CD4-positive, alpha-beta T cell (primary cell): ENCODE measurements at regions of chr6 and their contacts with region 1.

Region 1: GRCh38 chr6:37566111-37566949 is 66.6 kb upstream of the CCDC167 start:
- DNase-seq: peak; percentile 41 to 86 (median 70)
- ATAC-seq: peak; percentile 91
- H3K4me3 ChIP-seq: peak overlapping the region; percentile 56
- H3K4me3 Mint-ChIP-seq: peak overlapping the region; percentile 49
- H3K27ac ChIP-seq: no peak overlapping the region
- H3K27ac Mint-ChIP-seq: no peak overlapping the region
- H3K4me1 ChIP-seq: peaks cover 13% of the 10 kb centered on the region
- H3K4me1 Mint-ChIP-seq: peaks cover 12% of the 10 kb centered on the region
- H3K27me3 ChIP-seq: peaks cover 0 to 4% of the 10 kb centered on the region in 2 experiments
- H3K27me3 Mint-ChIP-seq: no peaks in the 10 kb centered on the region
- CTCF ChIP-seq: peak; percentile 93

Region 2: GRCh38 chr6:37207903-37208456 is 358.4 kb before region 1 on chr6:
- CTCF ChIA-PET with region 1: no interaction called
- POLR2A ChIA-PET with region 1: no interaction called
- intact Hi-C with region 1: no loop called
- DNase-seq: peak; percentile 83 to 93 (median 89)
- ATAC-seq: peak; percentile 73
- H3K4me3 ChIP-seq: no peak overlapping the region
- H3K4me3 Mint-ChIP-seq: peak overlapping the region; percentile 26
- H3K27ac ChIP-seq: no peak overlapping the region
- H3K27ac Mint-ChIP-seq: peak overlapping the region; percentile 58
- H3K4me1 ChIP-seq: peaks cover 56% of the 10 kb centered on the region
- H3K4me1 Mint-ChIP-seq: peaks cover 50% of the 10 kb centered on the region
- H3K27me3 ChIP-seq: no peaks in the 10 kb centered on the region
- H3K27me3 Mint-ChIP-seq: no peaks in the 10 kb centered on the region
- CTCF ChIP-seq: peak; percentile 86

Region 3: GRCh38 chr6:37324131-37325033 is 241.9 kb before region 1 on chr6:
- CTCF ChIA-PET with region 1: no interaction called
- POLR2A ChIA-PET with region 1: no interaction called
- intact Hi-C with region 1: loop called in 1 of 2 experiments (anchors 1 kb)
- DNase-seq: peak in 2 of 14 experiments; percentile 7 to 8
- ATAC-seq: no peak
- H3K4me3 ChIP-seq: no peak overlapping the region
- H3K4me3 Mint-ChIP-seq: no peak overlapping the region
- H3K27ac ChIP-seq: no peak overlapping the region
- H3K27ac Mint-ChIP-seq: peak overlapping the region; percentile 16
- H3K4me1 ChIP-seq: no peaks in the 10 kb centered on the region
- H3K4me1 Mint-ChIP-seq: no peaks in the 10 kb centered on the region
- H3K27me3 ChIP-seq: no peaks in the 10 kb centered on the region
- H3K27me3 Mint-ChIP-seq: no peaks in the 10 kb centered on the region
- CTCF ChIP-seq: no peak

Region 4: GRCh38 chr6:37381579-37381978 is 184.8 kb before region 1 on chr6:
- CTCF ChIA-PET with region 1: no interaction called
- POLR2A ChIA-PET with region 1: interaction called, 3 read pairs
- intact Hi-C with region 1: loop called (anchors 2 to 5 kb)
- DNase-seq: peak in 7 of 14 experiments; percentile 1 to 74 (median 24)
- ATAC-seq: peak; percentile 41
- H3K4me3 ChIP-seq: no peak overlapping the region
- H3K4me3 Mint-ChIP-seq: no peak overlapping the region
- H3K27ac ChIP-seq: no peak overlapping the region
- H3K27ac Mint-ChIP-seq: no peak overlapping the region
- H3K4me1 ChIP-seq: no peaks in the 10 kb centered on the region
- H3K4me1 Mint-ChIP-seq: no peaks in the 10 kb centered on the region
- H3K27me3 ChIP-seq: no peaks in the 10 kb centered on the region
- H3K27me3 Mint-ChIP-seq: no peaks in the 10 kb centered on the region
- CTCF ChIP-seq: peak; percentile 57

Region 5: DNA sequence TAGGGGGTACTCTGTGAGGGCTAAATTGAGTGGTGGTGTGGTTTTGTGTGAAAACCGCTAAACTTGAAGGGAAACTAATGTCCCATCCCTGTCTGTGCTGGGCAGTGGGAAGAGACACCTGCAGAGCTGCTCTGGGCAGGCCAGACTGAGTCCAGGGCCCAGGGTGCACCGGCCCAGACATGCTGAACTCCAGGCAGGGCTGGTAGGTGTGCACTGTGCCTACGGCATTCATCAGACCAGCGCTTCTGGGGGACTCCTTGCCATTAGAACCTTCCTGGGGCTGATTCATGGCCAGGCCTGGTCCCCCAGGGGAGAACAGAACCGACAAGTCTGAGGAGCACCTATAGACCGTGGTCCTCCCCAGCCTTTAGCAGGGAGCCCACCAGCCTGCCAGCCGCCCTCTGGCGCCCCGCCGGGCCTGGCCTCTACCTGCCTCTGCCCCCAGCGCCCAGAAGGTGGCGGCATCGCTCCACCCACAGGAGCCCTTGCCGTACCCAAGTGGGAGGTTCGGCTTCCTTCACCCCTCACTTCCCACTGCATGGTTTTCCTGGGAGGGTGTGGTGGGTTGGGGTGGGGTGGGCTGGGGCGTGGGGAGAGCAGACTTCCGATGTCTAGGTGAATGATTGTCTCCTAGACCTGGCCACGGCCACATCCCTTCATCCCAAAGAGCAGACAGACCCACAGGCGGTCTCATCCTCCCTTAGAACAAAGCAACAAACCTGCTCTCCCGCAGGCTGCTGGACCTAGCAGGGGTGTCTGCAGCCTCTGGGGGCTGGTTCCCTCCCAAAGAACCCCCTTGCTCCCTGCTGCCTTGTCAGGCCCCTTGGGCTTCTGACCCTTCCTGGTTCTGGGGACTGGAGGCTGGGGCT is 82.2 kb before region 1 on chr6:
- CTCF ChIA-PET with region 1: interaction called, 9 read pairs
- POLR2A ChIA-PET with region 1: interaction called, 4 read pairs
- intact Hi-C with region 1: loop called (anchors 1 kb)
- DNase-seq: peak; percentile 62 to 89 (median 76)
- ATAC-seq: peak; percentile 65
- H3K4me3 ChIP-seq: no peak overlapping the region
- H3K4me3 Mint-ChIP-seq: no peak overlapping the region
- H3K27ac ChIP-seq: peak overlapping the region in 1 of 2 donors; percentile 50
- H3K27ac Mint-ChIP-seq: no peak overlapping the region
- H3K4me1 ChIP-seq: peaks cover 40% of the 10 kb centered on the region
- H3K4me1 Mint-ChIP-seq: peaks cover 14% of the 10 kb centered on the region
- H3K27me3 ChIP-seq: no peaks in the 10 kb centered on the region
- H3K27me3 Mint-ChIP-seq: no peaks in the 10 kb centered on the region
- CTCF ChIP-seq: peak; percentile 84

Region 6: DNA sequence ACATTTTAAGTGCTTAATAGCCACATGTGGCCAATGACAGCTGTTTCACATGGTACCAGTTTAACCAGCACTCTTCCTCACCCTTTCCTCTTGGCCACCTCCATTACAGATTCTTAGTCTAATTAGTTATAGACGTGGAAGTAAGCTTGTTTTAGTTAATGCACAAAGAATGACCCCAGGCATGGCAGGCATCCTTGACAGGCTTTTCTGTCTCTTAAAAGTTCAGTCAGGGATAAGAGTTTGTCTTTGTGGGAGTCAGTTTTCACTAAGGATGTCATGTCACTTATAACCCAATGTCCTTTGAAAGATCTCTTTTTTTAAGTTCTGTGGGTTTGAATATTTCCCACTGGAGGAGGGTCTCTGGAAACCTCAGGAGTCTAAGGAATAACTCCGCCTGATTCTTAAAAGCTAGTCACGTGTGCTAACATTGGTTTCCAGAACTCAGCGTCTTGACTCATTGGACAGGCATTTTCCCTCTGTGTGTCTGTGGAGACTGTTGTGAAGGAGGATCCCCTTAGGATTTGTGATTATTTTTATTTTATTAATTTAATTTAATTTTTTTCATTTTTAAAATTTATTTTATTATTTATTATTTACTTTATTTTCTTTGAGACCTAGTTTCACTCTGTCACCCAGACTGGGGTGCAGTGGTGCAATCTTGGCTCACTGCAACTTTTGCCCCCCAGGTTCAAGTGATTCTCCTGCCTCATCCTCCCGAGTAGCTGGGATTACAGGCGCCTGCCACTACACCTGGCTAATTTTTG is 424.6 kb after region 1 on chr6:
- CTCF ChIA-PET with region 1: no interaction called
- POLR2A ChIA-PET with region 1: no interaction called
- intact Hi-C with region 1: no loop called
- DNase-seq: no peak
- ATAC-seq: no peak
- H3K4me3 ChIP-seq: no peak overlapping the region
- H3K4me3 Mint-ChIP-seq: no peak overlapping the region
- H3K27ac ChIP-seq: no peak overlapping the region
- H3K27ac Mint-ChIP-seq: no peak overlapping the region
- H3K4me1 ChIP-seq: no peaks in the 10 kb centered on the region
- H3K4me1 Mint-ChIP-seq: peaks cover 82% of the 10 kb centered on the region
- H3K27me3 ChIP-seq: no peaks in the 10 kb centered on the region
- H3K27me3 Mint-ChIP-seq: no peaks in the 10 kb centered on the region
- CTCF ChIP-seq: no peak